Sciatic nerve (tissue), 2 donors: ENCODE measurements at regions of chr22 and their contacts with region 1.

Region 1: GRCh38 chr22:50507991-50508884 is at the start of gene NCAPH2:
- DNase-seq: peak; percentile 99
- ATAC-seq: peak; percentile 87
- total RNA-seq, gene NCAPH2: 39.8 TPM

Region 2: DNA sequence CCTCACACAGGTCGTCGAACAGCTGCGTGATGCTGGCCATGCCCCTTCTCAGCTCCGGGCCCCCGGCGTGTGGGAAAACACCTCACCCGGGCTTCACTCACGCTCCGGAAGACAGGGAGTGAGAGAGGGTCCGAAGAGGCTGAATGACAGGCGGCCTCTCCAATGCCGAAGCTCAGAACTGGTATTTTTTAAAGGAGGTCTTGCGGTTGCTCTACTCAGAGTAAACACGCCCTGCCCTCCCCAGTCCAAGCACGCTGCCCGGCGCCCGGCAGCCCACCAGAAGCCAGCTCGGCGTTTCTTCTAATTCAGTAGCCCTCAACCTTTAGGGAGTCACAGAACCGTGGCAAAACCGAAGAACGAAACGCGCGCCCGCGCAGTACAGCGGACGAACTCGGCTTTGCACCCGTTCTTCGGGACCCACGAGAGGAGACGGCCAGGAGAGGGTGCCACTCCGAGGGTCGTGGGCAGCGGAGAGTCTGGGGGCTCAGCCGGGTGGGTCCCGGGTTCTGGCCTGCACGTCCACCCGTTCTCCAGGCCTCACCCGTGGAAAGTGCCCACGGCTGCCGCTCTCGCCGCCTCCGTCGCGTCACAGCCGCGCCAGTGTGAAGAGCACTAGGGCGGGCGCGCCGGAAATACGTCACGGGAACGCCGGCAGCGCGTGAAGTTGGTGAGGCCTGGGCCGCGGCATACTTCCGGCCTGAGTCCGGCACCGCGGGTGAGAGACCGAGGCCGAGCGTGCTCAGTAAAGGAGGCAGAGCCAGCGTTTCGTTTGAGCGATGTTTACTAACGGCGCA is 263.6 kb before region 1 on chr22 and contains the start of gene TUBGCP6:
- intact Hi-C with region 1: loop called (anchors 10 kb)
- DNase-seq: peak; percentile 96
- ATAC-seq: peak; percentile 95
- total RNA-seq, gene TUBGCP6: 47.6 TPM

Region 3: GRCh38 chr22:50341977-50342650 is 166.1 kb before region 1 on chr22:
- intact Hi-C with region 1: no loop called
- DNase-seq: peak; percentile 95
- ATAC-seq: peak; percentile 85